Heart left ventricle (tissue), 16 donors: ENCODE measurements at regions of chr7 and their contacts with region 1.

Region 1: DNA sequence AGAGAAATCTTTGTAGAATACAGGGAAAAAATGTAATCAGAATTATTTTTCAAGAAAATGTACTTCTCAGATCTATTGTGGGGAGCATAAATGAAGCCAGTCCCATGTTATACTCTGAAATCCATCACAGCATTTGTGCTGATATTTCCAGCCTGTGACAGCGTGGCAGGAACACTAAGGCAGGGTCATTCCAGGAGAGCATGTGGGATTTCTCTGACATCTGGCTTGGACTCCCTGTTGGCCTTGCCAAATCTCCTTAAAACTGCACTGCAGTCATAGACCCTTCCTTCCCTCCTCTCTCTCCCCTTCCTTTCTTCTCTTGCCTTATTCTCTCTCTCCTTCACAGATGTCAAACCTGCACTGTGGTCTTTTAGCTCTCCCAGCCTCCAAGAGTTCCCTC is 6.5 kb upstream of the TSPAN13 start:
- DNase-seq: peak in 4 of 5 donors; percentile 43 to 64 (median 48)
- ATAC-seq: peak; percentile 86 to 91 (median 90)
- H3K4me3 ChIP-seq: no peak overlapping the region
- H3K27ac ChIP-seq: peak overlapping the region in 1 of 12 donors; percentile 19
- H3K4me1 ChIP-seq: peaks cover 0 to 34% (median 15%) of the 10 kb centered on the region in 12 donors
- H3K27me3 ChIP-seq: no peaks in the 10 kb centered on the region
- CTCF ChIP-seq: no peak
- POLR2A ChIP-seq: no peak

Region 2: GRCh38 chr7:16450366-16450765 is 296.7 kb before region 1 on chr7:
- intact Hi-C with region 1: no loop called
- DNase-seq: no peak
- ATAC-seq: no peak
- H3K4me3 ChIP-seq: no peak overlapping the region
- H3K27ac ChIP-seq: no peak overlapping the region
- H3K4me1 ChIP-seq: peaks cover 0 to 4% (median 0%) of the 10 kb centered on the region in 12 donors
- H3K27me3 ChIP-seq: no peaks in the 10 kb centered on the region
- CTCF ChIP-seq: no peak
- POLR2A ChIP-seq: no peak

Region 3: DNA sequence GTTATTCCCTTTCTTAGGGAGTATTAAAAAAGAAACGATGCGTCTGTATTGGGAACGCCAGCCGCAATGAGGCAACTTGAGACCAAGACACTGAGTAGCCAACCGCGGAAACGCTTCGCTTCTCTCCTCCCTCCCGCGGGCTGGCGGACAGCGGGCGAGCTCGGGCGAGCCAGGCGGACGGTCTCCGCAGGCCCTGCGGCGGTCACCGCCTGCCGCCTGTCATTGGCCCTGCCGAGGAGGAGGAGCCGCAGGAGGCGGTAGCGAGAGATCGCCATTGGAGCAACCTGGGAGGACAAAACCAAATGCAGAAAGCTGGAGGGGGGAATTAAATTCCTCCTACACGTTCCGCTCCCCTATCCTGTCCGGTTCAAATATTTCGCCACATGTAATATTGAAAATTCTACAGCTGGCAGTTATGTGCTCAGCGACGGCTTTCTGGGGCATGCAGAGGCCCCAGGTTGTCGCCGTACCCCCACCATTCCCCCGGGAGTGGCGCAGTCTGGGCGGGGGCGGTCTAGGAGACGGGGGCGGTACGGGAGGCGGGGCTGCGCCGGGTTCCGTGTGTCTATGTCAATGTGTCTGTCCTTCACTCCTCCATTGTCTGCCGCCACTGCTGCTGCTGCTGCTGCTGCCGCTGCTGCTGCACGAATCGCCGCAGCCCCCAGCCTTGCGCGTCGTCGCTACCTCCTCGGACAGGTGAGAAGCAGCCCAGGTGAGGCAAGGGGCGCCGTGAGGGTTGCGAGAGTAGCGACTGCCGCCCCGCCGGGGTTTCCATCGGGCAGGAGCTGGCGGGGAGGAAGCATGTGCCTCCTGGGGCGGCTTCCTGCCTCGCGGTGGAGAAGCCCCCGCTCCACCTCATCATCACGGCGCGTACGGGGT is 101.3 kb before region 1 on chr7 and contains the starts of genes ANKMY2 and BZW2:
- intact Hi-C with region 1: loop called in 1 of 10 experiments (anchors 5 kb)
- DNase-seq: peak; percentile 96 to 98 (median 97)
- ATAC-seq: peak; percentile 95 to 96 (median 96)
- H3K4me3 ChIP-seq: peak within 1 kb of the TSS; percentile 71 to 97 (median 86)
- H3K27ac ChIP-seq: peak within 1 kb of the TSS; percentile 75 to 97 (median 94)
- H3K4me1 ChIP-seq: peaks cover 0 to 75% (median 53%) of the 10 kb centered on the region in 12 donors
- H3K27me3 ChIP-seq: no peaks in the 10 kb centered on the region
- CTCF ChIP-seq: peak in 6 of 12 donors; percentile 5 to 50 (median 24)
- POLR2A ChIP-seq: peak in 1 of 2 donors; percentile 98
- total RNA-seq, gene ANKMY2: 17.7 to 44.3 (median 28.3) TPM
- total RNA-seq, gene BZW2: 195 to 808 (median 308) TPM